Activated CD8-positive, alpha-beta T cell treated with anti-CD3 and anti-CD28 coated beads for 36 hours (primary cell): ENCODE measurements at regions of chr11 and their contacts with region 1.

Region 1: GRCh38 chr11:123261345-123262106 is 66.5 kb upstream of the CLMP start:
- DNase-seq: peak; percentile 88
- ATAC-seq: peak; percentile 93
- H3K4me3 Mint-ChIP-seq: no peak overlapping the region
- H3K27ac Mint-ChIP-seq: no peak overlapping the region
- H3K4me1 Mint-ChIP-seq: peaks cover 6% of the 10 kb centered on the region
- H3K27me3 Mint-ChIP-seq: peaks cover 25% of the 10 kb centered on the region
- CTCF ChIP-seq: peak; percentile 88

Region 2: GRCh38 chr11:123478352-123478987 is 216.9 kb after region 1 on chr11:
- CTCF ChIA-PET with region 1: interaction called, 11 read pairs
- POLR2A ChIA-PET with region 1: no interaction called
- intact Hi-C with region 1: no loop called
- DNase-seq: peak; percentile 25
- ATAC-seq: peak; percentile 35
- H3K4me3 Mint-ChIP-seq: peak overlapping the region; percentile 7
- H3K27ac Mint-ChIP-seq: peak overlapping the region; percentile 14
- H3K4me1 Mint-ChIP-seq: peaks cover 42% of the 10 kb centered on the region
- H3K27me3 Mint-ChIP-seq: no peaks in the 10 kb centered on the region
- CTCF ChIP-seq: peak; percentile 86